ENCODE measurements at regions of chr15 and their contacts with region 1.

Region 1: DNA sequence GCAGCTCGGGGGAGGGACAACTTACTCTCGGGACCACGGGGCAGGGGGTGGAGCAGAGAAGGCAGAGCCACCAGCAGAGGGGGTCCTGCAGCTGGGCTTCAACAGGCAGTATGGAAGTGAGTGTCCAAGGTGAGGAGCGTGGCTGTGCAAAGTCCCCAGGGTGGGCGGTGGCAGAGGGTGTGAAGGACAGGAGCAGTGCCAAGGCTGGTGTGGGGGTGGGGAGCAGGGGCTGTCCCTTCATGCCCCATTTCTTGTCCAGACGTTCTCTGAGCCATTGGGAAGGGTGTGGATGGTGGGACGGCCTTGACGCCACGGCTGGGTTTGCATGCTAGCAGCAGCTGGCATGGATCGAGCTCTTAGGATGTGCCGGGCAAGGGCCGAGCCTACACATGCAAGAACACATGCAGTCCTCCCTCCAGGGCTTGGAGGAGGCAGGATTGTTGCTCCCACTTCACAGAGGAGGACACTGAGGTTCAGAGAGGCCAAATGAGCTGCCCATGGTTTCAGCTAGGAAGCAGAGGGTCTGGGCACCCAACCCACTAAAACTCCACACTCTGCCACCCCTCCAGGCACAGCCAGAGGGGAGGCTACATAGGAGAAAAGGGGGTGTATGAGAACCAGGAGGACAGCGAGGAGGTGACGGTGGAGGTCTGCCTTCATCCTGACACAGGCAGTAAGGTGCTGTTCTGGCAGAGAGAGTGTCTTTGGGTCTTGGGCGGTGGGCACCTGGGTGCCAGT is 93.6 kb downstream of the TBC1D2B start:
- DNase-seq: no peak
- ATAC-seq: no peak
- H3K4me3 Mint-ChIP-seq: no peak overlapping the region
- H3K27ac Mint-ChIP-seq: no peak overlapping the region
- H3K4me1 Mint-ChIP-seq: peaks cover under 1% of the 10 kb centered on the region
- H3K27me3 Mint-ChIP-seq: peaks cover 10% of the 10 kb centered on the region
- CTCF ChIP-seq: no peak

Region 2: GRCh38 chr15:78024883-78025282 is 41.0 kb after region 1 on chr15:
- CTCF ChIA-PET with region 1: no interaction called
- POLR2A ChIA-PET with region 1: no interaction called
- intact Hi-C with region 1: loop called (anchors 5 kb)
- DNase-seq: no peak
- ATAC-seq: no peak
- H3K4me3 Mint-ChIP-seq: no peak overlapping the region
- H3K27ac Mint-ChIP-seq: no peak overlapping the region
- H3K4me1 Mint-ChIP-seq: no peaks in the 10 kb centered on the region
- H3K27me3 Mint-ChIP-seq: no peaks in the 10 kb centered on the region
- CTCF ChIP-seq: no peak

Measured in activated B cell treated with CpG ODN at 0.5 μM for 24 hours (primary cell).